SK-N-SH (cell line): ENCODE measurements at regions of chr3 and their contacts with region 1.

Region 1: GRCh38 chr3:141360888-141361598 is 7.3 kb upstream of the ZBTB38 start:
- DNase-seq: peak; percentile 70
- H3K4me3 ChIP-seq: peak overlapping the region in 1 of 2 experiments; percentile 36; a peak in 1 of 4 replicates
- H3K27ac ChIP-seq: peak overlapping the region; percentile 53 to 61; a peak in 3 of 4 replicates
- H3K4me1 ChIP-seq: peaks cover 2 to 17% of the 10 kb centered on the region in 2 experiments; a peak in 2 of 4 replicates
- H3K27me3 ChIP-seq: no peaks in the 10 kb centered on the region
- CTCF ChIP-seq: peak; percentile 86
- EP300 ChIP-seq: peak in 1 of 2 experiments; percentile 63; a peak in 2 of 4 replicates
- RAD21 ChIP-seq: peak; percentile 93

Region 2: GRCh38 chr3:141151439-141151838 is 209.6 kb before region 1 on chr3:
- CTCF ChIA-PET with region 1: no interaction called
- POLR2A ChIA-PET with region 1: no interaction called
- DNase-seq: no peak
- H3K4me3 ChIP-seq: no peak overlapping the region
- H3K27ac ChIP-seq: no peak overlapping the region
- H3K4me1 ChIP-seq: peaks cover 0 to 11% of the 10 kb centered on the region in 2 experiments; a peak in 1 of 4 replicates
- H3K27me3 ChIP-seq: no peaks in the 10 kb centered on the region
- CTCF ChIP-seq: no peak
- EP300 ChIP-seq: no peak
- RAD21 ChIP-seq: no peak

Region 3: GRCh38 chr3:141303481-141304223 is 57.4 kb before region 1 on chr3:
- CTCF ChIA-PET with region 1: interaction called, 27 read pairs
- POLR2A ChIA-PET with region 1: no interaction called
- DNase-seq: peak; percentile 66
- H3K4me3 ChIP-seq: no peak overlapping the region; a peak in 1 of 4 replicates
- H3K27ac ChIP-seq: no peak overlapping the region
- H3K4me1 ChIP-seq: no peaks in the 10 kb centered on the region; a peak in 1 of 4 replicates
- H3K27me3 ChIP-seq: no peaks in the 10 kb centered on the region
- CTCF ChIP-seq: peak; percentile 89
- EP300 ChIP-seq: no peak
- RAD21 ChIP-seq: peak; percentile 75

Region 4: DNA sequence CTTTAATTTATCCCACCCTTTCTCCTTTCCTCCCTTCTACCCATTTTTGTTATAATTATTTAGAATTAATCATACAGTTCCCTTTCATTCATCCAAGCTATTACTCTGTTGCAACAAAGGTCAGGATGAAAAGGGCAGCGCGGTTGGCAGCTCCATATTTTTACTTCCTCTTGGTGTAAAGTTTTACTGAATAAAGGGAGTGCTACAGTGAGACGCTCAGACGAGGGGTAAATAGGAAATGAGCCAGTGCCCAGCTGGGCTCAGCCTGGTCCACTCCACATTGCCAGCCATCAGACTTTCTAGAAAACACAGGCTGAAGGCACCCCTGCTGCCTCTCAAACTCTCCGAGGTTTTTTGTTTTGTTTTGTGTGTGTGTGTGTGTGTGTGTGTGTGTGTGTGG is 14.6 kb before region 1 on chr3:
- CTCF ChIA-PET with region 1: interaction called, 17 read pairs
- POLR2A ChIA-PET with region 1: no interaction called
- DNase-seq: no peak
- H3K4me3 ChIP-seq: no peak overlapping the region
- H3K27ac ChIP-seq: no peak overlapping the region
- H3K4me1 ChIP-seq: no peaks in the 10 kb centered on the region
- H3K27me3 ChIP-seq: no peaks in the 10 kb centered on the region
- CTCF ChIP-seq: no peak
- EP300 ChIP-seq: no peak
- RAD21 ChIP-seq: no peak

Region 5: DNA sequence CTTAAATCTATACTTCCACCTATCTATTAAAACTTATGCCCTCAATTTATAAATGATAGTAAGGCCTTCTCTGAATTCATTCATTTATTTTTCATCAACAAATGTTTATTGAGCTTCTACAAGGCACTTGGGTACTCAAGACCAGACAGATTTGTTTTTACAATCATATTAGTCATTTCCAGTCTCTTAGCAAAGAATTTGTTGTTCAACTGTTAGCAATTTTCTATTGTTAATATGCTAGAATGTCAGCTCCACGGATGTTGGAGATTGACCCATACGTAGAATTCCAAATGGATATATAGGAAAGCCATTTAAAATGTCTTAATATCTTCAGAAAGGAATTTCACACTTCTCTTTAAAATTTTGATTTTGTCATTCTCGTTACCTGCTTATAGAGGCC is 44.0 kb after region 1 on chr3:
- CTCF ChIA-PET with region 1: interaction called, 12 read pairs
- POLR2A ChIA-PET with region 1: no interaction called
- DNase-seq: no peak
- H3K4me3 ChIP-seq: no peak overlapping the region
- H3K27ac ChIP-seq: peak overlapping the region in 1 of 2 experiments; percentile 78; a peak in 2 of 4 replicates
- H3K4me1 ChIP-seq: peaks cover 11 to 22% of the 10 kb centered on the region in 2 experiments
- H3K27me3 ChIP-seq: no peaks in the 10 kb centered on the region
- CTCF ChIP-seq: no peak
- EP300 ChIP-seq: no peak
- RAD21 ChIP-seq: no peak

Region 6: DNA sequence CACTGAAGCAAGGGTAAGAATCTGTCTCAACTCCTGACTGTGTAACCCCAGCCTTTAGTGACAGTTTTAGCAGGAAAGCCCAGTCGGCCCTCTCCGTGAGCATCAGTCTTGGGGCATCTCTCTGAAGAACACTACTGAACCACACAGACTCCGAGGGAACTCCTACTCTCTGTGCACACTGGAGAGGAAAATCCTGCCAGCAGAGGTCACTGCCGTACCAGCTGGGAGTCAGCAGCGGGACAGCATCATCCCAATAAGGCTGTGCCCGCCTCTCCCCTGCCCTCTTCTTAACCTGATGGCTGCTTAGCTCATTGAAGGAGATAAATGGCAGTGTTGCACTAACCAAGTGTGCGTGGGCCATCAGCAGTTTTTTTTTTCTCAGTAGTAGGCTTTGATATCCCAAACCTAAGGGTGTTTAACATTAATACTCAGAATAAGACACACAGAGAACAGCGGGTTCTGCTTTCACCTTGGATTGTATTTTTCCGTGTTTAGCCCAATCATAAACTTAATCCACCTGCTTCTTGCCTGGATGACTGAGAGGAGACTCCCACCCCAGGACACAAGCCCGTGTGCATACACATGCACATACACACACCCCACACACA is 99.2 kb after region 1 on chr3:
- CTCF ChIA-PET with region 1: interaction called, 123 read pairs
- POLR2A ChIA-PET with region 1: no interaction called
- DNase-seq: peak; percentile 84
- H3K4me3 ChIP-seq: peak overlapping the region in 1 of 2 experiments; percentile 2; a peak in 1 of 4 replicates
- H3K27ac ChIP-seq: no peak overlapping the region
- H3K4me1 ChIP-seq: no peaks in the 10 kb centered on the region; a peak in 2 of 4 replicates
- H3K27me3 ChIP-seq: no peaks in the 10 kb centered on the region
- CTCF ChIP-seq: peak; percentile 89
- EP300 ChIP-seq: no peak
- RAD21 ChIP-seq: peak; percentile 91

Region 7: DNA sequence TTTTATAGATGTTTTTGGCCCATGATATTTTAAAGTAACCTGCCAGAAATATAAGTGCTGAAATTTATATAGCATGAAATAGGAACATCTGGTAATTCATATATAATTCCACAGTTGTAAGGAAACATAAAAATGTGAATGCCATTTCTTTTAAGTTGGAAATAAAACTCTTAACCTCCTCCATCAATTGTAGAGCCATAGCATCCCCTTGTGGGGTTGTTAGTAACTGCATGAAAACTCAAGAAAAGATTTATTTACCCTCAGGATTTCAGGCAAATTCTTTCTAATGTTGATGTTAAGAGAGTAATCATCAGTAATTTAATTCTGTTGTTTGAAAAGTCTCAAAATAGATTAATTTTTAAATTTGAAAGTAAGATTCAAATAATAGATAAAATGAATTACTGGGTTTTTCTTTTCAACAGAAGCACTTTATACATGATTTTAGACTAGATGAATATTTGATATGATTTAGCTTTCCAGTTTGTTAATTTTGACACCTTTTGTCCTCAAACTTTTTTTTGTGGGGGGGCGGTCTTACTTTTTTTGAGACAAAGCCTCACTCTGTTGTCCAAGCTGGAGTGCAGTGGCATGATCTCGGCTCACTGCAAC is 200.5 kb after region 1 on chr3:
- CTCF ChIA-PET with region 1: interaction called, 27 read pairs
- POLR2A ChIA-PET with region 1: no interaction called
- DNase-seq: peak; percentile 47
- H3K4me3 ChIP-seq: no peak overlapping the region; a peak in 1 of 4 replicates
- H3K27ac ChIP-seq: no peak overlapping the region
- H3K4me1 ChIP-seq: peaks cover 0 to 18% of the 10 kb centered on the region in 2 experiments; a peak in 1 of 4 replicates
- H3K27me3 ChIP-seq: no peaks in the 10 kb centered on the region
- CTCF ChIP-seq: peak; percentile 99
- EP300 ChIP-seq: no peak
- RAD21 ChIP-seq: peak; percentile 98